ENCODE measurements at regions of chr4 and their contacts with region 1.

Region 1: GRCh38 chr4:170047771-170048354 is 21.7 kb upstream of the MFAP3L start:
- DNase-seq: peak; percentile 49
- H3K4me3 ChIP-seq: no peak overlapping the region
- H3K27ac ChIP-seq: no peak overlapping the region
- H3K27me3 ChIP-seq: peaks cover 3% of the 10 kb centered on the region
- CTCF ChIP-seq: peak; percentile 80

Region 2: GRCh38 chr4:170027181-170027829 is 20.6 kb before region 1 on chr4:
- CTCF ChIA-PET with region 1: interaction called, 12 read pairs
- POLR2A ChIA-PET with region 1: no interaction called
- DNase-seq: peak; percentile 94
- H3K4me3 ChIP-seq: peak overlapping the region; percentile 75
- H3K27ac ChIP-seq: no peak overlapping the region
- H3K27me3 ChIP-seq: peaks cover 18% of the 10 kb centered on the region
- CTCF ChIP-seq: no peak

Region 3: GRCh38 chr4:170033999-170034398 is 13.9 kb before region 1 on chr4:
- CTCF ChIA-PET with region 1: interaction called, 14 read pairs
- POLR2A ChIA-PET with region 1: no interaction called
- DNase-seq: no peak
- H3K4me3 ChIP-seq: no peak overlapping the region
- H3K27ac ChIP-seq: no peak overlapping the region
- H3K27me3 ChIP-seq: peaks cover 5% of the 10 kb centered on the region
- CTCF ChIP-seq: no peak

Region 4: GRCh38 chr4:170057866-170058265 is 10.0 kb after region 1 on chr4:
- CTCF ChIA-PET with region 1: interaction called, 12 read pairs
- POLR2A ChIA-PET with region 1: no interaction called
- DNase-seq: no peak
- H3K4me3 ChIP-seq: no peak overlapping the region
- H3K27ac ChIP-seq: no peak overlapping the region
- H3K27me3 ChIP-seq: no peaks in the 10 kb centered on the region
- CTCF ChIP-seq: no peak

Region 5: DNA sequence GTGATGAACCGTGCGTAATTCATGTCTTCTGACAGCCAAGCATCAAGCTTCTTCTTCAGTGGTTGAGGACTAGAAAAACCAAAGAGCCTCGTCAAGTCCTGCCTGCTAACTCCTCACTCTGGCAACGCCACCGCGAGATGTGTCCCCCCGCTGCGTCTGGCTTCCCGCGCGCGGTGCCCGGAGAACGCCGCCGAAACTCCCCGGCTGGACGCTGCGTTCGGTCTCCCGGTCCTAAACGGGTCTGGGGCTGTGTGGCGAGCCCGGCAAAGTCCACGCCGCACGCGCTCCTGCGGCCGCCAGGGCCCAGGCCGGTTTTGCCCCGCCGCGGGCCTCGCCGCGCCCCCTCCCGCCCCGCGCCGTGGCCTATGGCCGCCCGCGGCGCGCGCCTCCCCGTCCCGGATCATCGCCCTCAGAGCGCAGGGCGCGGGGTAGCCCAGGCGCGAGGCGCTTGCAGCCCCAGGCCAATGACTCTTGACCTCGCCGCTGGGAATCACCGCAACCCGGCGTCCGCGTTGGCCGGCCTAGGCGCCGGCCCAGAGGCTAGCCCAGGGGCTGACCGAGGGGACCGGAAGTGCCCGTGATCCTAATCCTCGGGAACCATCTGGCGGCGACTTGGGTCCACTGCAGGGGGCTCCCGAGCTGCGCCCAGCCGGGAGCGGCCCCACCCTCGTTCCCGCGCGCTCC is 41.9 kb after region 1 on chr4 and contains the start of gene AADAT:
- CTCF ChIA-PET with region 1: interaction called, 12 read pairs
- POLR2A ChIA-PET with region 1: no interaction called
- DNase-seq: peak; percentile 41
- H3K4me3 ChIP-seq: peak within 1 kb of the TSS; percentile 66
- H3K27ac ChIP-seq: peak within 1 kb of the TSS; percentile 54
- H3K27me3 ChIP-seq: no peaks in the 10 kb centered on the region
- CTCF ChIP-seq: peak; percentile 70
- polyA plus RNA-seq, gene AADAT: 13.8 and 17.8 TPM in 2 replicates

Region 6: GRCh38 chr4:170190265-170190664 is 142.4 kb after region 1 on chr4:
- CTCF ChIA-PET with region 1: no interaction called
- POLR2A ChIA-PET with region 1: no interaction called
- DNase-seq: no peak
- H3K4me3 ChIP-seq: no peak overlapping the region
- H3K27ac ChIP-seq: no peak overlapping the region
- H3K27me3 ChIP-seq: no peaks in the 10 kb centered on the region
- CTCF ChIP-seq: no peak

Measured in AG04450 (cell line).